Activated CD8-positive, alpha-beta T cell treated with anti-CD3 and anti-CD28 coated beads for 36 hours (primary cell): ENCODE measurements at regions of chr9 and their contacts with region 1.

Region 1: GRCh38 chr9:7033076-7034045 is 275.6 kb downstream of the KDM4C start:
- DNase-seq: no peak
- ATAC-seq: no peak
- H3K4me3 Mint-ChIP-seq: no peak overlapping the region
- H3K27ac Mint-ChIP-seq: no peak overlapping the region
- H3K4me1 Mint-ChIP-seq: no peaks in the 10 kb centered on the region
- H3K27me3 Mint-ChIP-seq: no peaks in the 10 kb centered on the region
- CTCF ChIP-seq: no peak

Region 2: DNA sequence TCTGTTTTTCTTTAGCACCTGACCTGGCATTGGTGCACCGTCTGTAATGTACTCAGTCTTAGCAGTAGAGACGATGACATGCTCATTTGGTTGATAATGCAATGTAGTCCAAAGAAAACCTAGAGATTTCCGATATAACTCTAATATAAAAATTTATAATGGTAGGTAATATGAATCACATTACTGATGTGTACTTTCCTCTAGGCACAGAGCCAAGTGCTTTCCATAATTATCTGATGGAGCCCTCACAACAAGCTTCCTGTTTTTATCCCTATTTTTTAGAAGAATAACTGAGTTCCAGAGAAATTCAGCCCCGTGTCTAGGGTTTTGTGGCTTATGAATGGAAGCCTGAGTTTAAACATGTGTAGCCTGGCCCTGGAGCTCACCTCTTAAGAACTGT is 221.9 kb before region 1 on chr9:
- CTCF ChIA-PET with region 1: no interaction called
- POLR2A ChIA-PET with region 1: no interaction called
- intact Hi-C with region 1: no loop called
- DNase-seq: no peak
- ATAC-seq: no peak
- H3K4me3 Mint-ChIP-seq: no peak overlapping the region
- H3K27ac Mint-ChIP-seq: no peak overlapping the region
- H3K4me1 Mint-ChIP-seq: peaks cover 3% of the 10 kb centered on the region
- H3K27me3 Mint-ChIP-seq: no peaks in the 10 kb centered on the region
- CTCF ChIP-seq: no peak

Region 3: DNA sequence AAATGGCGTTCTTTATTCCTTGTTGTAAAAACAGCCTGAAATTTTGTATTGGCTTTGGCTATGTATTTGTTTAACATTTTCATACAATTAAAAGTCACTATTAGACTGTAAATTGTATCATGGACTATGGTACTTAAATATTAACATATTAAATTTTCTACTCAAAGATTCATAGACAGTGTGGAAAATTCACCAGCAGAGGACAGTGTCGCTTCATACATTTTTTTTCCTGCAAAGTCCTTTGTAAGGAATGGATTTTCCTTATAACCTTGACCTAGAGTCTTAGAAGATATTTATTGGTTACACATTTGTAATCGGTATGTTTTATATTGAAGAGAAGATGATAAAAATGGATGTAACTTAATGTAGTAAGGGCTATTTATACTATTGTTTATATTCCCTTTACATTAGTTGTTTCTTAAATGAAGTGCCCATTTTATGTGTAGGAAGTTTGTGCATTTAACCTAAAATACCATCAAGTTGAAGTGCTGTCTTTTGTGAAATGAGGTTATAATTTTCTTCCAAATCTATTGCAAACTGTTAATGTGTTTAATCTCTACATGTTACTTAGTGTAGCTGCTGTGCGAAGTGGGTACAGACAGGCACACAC is 125.5 kb before region 1 on chr9:
- CTCF ChIA-PET with region 1: no interaction called
- POLR2A ChIA-PET with region 1: no interaction called
- intact Hi-C with region 1: loop called (anchors 10 kb)
- DNase-seq: peak; percentile 18
- ATAC-seq: no peak
- H3K4me3 Mint-ChIP-seq: no peak overlapping the region
- H3K27ac Mint-ChIP-seq: no peak overlapping the region
- H3K4me1 Mint-ChIP-seq: peaks cover 4% of the 10 kb centered on the region
- H3K27me3 Mint-ChIP-seq: no peaks in the 10 kb centered on the region
- CTCF ChIP-seq: peak; percentile 40

Region 4: GRCh38 chr9:6960777-6961176 is 72.6 kb before region 1 on chr9:
- CTCF ChIA-PET with region 1: no interaction called
- POLR2A ChIA-PET with region 1: no interaction called
- intact Hi-C with region 1: loop called (anchors 10 kb)
- DNase-seq: no peak
- ATAC-seq: no peak
- H3K4me3 Mint-ChIP-seq: no peak overlapping the region
- H3K27ac Mint-ChIP-seq: no peak overlapping the region
- H3K4me1 Mint-ChIP-seq: peaks cover 5% of the 10 kb centered on the region
- H3K27me3 Mint-ChIP-seq: no peaks in the 10 kb centered on the region
- CTCF ChIP-seq: no peak

Region 5: DNA sequence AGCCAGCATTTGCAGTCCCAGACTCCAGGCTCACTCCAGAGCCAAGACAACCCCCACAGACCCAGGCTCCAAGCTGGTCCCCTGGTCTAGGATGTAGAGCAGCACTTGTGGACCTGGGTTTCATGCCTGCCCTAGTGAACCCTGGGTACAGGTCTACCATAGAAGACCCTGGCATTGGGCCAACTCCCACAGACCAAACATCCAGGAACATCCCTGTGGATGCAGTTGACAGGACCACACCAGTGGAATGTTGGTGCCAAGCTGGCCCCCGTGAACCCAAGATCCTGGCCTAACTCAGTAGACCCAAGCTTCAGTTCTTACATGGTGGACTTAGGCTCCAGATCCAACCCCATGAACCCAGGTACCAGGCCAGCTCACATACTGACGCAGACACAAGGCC is 24.9 kb before region 1 on chr9:
- CTCF ChIA-PET with region 1: no interaction called
- POLR2A ChIA-PET with region 1: no interaction called
- intact Hi-C with region 1: no loop called
- DNase-seq: no peak
- ATAC-seq: no peak
- H3K4me3 Mint-ChIP-seq: no peak overlapping the region
- H3K27ac Mint-ChIP-seq: no peak overlapping the region
- H3K4me1 Mint-ChIP-seq: peaks cover 17% of the 10 kb centered on the region
- H3K27me3 Mint-ChIP-seq: no peaks in the 10 kb centered on the region
- CTCF ChIP-seq: no peak

Region 6: GRCh38 chr9:7055201-7055903 is 22.0 kb after region 1 on chr9:
- CTCF ChIA-PET with region 1: interaction called, 17 read pairs
- POLR2A ChIA-PET with region 1: interaction called, 3 read pairs
- intact Hi-C with region 1: no loop called
- DNase-seq: no peak
- ATAC-seq: no peak
- H3K4me3 Mint-ChIP-seq: no peak overlapping the region
- H3K27ac Mint-ChIP-seq: no peak overlapping the region
- H3K4me1 Mint-ChIP-seq: peaks cover 8% of the 10 kb centered on the region
- H3K27me3 Mint-ChIP-seq: no peaks in the 10 kb centered on the region
- CTCF ChIP-seq: no peak